ENCODE measurements at regions of chr14 and their contacts with region 1.

Region 1: GRCh38 chr14:64914237-64914971 is at the start of gene CHURC1:
- DNase-seq: peak; percentile 98 to 100
- H3K4me3 ChIP-seq: peak within 1 kb of the TSS; percentile 70
- H3K27ac ChIP-seq: peak within 1 kb of the TSS; percentile 62
- H3K4me1 ChIP-seq: peaks cover 20% of the 10 kb centered on the region
- H3K27me3 ChIP-seq: no peaks in the 10 kb centered on the region
- CTCF ChIP-seq: no peak
- total RNA-seq, gene CHURC1: 88.1 and 91.8 TPM in 2 replicates

Region 2: DNA sequence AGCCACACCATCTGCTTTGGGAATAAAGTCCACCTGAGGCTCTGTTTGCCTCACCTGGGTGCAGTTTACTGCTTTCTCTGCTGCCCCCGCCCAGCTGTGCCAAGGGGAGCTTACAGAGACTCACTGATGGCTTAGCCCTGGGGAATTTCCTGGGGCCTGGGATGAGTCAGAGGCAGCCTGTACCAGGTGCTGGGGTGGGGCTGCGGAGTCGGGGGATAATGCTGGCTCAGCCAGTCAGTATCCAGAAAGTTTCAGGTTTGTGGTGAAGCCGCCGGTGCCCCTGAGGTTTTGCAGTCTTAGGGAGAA is 187.9 kb before region 1 on chr14:
- CTCF ChIA-PET with region 1: no interaction called
- POLR2A ChIA-PET with region 1: no interaction called
- intact Hi-C with region 1: no loop called
- DNase-seq: peak; percentile 91 to 92
- H3K4me3 ChIP-seq: no peak overlapping the region
- H3K27ac ChIP-seq: peak overlapping the region; percentile 53
- H3K4me1 ChIP-seq: peaks cover 56% of the 10 kb centered on the region
- H3K27me3 ChIP-seq: no peaks in the 10 kb centered on the region
- CTCF ChIP-seq: no peak

Region 3: GRCh38 chr14:64823305-64823861 is 91.0 kb before region 1 on chr14:
- CTCF ChIA-PET with region 1: interaction called, 12 read pairs
- POLR2A ChIA-PET with region 1: no interaction called
- intact Hi-C with region 1: no loop called
- DNase-seq: peak; percentile 56 to 74
- H3K4me3 ChIP-seq: no peak overlapping the region; the same call in 1 of the 2 replicates
- H3K27ac ChIP-seq: no peak overlapping the region
- H3K4me1 ChIP-seq: no peaks in the 10 kb centered on the region
- H3K27me3 ChIP-seq: peaks cover 10% of the 10 kb centered on the region; the same call in 1 of the 2 replicates
- CTCF ChIP-seq: peak; percentile 90

Region 4: DNA sequence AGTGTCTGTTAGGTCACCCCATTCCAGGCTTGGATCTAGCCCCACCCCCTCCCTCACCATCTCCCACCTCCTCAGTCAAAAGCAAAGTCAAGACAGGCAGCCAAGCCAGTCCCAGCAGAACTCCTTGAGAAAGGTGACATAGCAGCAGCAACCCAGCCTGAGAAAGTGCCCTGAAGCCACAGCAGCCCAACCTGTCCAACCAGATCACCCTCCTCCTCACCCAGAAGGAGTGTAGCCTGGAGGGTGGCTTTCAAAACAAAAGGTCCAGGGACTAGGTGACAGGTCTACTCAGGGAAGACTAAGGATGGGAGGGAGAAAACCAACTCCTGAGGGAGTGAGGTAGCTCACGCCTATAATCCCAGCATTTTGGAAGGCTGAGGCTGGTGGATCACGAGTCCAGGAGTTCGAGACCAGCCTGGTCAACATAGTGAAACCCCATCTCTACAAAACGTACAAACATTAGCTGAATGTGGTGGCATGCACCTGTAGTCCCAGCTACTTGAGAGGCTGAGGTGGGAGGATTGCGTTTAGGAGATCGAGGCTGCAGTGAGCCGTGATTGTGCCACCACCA is 52.7 kb after region 1 on chr14:
- CTCF ChIA-PET with region 1: no interaction called
- POLR2A ChIA-PET with region 1: no interaction called
- intact Hi-C with region 1: loop called (anchors 2 kb)
- DNase-seq: peak; percentile 93 to 99
- H3K4me3 ChIP-seq: peak overlapping the region; percentile 38; the same call in 1 of the 2 replicates
- H3K27ac ChIP-seq: peak overlapping the region; percentile 88
- H3K4me1 ChIP-seq: peaks cover 76% of the 10 kb centered on the region
- H3K27me3 ChIP-seq: no peaks in the 10 kb centered on the region
- CTCF ChIP-seq: no peak

Measured in PC-9 (cell line).